Right ventricle myocardium superior (tissue), 1 donor: ENCODE measurements at regions of chr7 and their contacts with region 1.

Region 1: GRCh38 chr7:37181550-37181932 is 267.1 kb downstream of the ELMO1 start:
- DNase-seq: no peak
- ATAC-seq: no peak

Region 2: DNA sequence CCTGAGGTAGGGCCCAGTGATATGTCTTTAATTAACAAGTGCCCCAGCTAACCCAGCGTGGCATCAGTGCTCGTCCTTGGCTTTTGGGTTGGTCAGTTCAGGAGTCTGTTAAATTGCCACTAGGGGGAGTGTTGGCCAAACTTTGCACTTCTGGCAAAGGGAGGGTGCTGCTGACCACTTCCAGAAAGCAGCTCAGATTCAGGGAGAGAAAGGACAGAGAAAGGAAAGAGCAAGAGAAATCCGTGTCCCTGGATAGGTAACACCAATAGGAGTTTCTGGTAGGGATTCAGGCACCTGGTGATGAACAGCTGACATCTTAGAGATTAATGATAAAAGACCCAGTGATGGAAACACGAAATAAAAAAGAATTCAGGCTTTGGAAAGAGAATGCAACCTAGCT is 214.2 kb before region 1 on chr7:
- intact Hi-C with region 1: loop called (anchors 5 kb)
- DNase-seq: peak; percentile 46
- ATAC-seq: peak; percentile 95

Region 3: GRCh38 chr7:36986429-36987362 is 194.8 kb before region 1 on chr7:
- intact Hi-C with region 1: loop called (anchors 5 kb)
- DNase-seq: peak; percentile 67
- ATAC-seq: peak; percentile 70

Region 4: GRCh38 chr7:37007268-37007667 is 174.3 kb before region 1 on chr7:
- intact Hi-C with region 1: no loop called
- DNase-seq: no peak
- ATAC-seq: no peak